Activated T-helper 1 cell treated with anti-CD3 and anti-CD28 coated beads, Interleukin-12 subunit alpha, Interleukin-12 subunit beta, Interleukin-2, Interleukin-4 antibody, amounts not matched to agents 30 ng/mL and 10 ng/mL and 1 ng/mL, durations not matched to agents 14 hours and 24 hours and 36 hours (primary cell): ENCODE measurements at regions of chr4 and their contacts with region 1.

Region 1: DNA sequence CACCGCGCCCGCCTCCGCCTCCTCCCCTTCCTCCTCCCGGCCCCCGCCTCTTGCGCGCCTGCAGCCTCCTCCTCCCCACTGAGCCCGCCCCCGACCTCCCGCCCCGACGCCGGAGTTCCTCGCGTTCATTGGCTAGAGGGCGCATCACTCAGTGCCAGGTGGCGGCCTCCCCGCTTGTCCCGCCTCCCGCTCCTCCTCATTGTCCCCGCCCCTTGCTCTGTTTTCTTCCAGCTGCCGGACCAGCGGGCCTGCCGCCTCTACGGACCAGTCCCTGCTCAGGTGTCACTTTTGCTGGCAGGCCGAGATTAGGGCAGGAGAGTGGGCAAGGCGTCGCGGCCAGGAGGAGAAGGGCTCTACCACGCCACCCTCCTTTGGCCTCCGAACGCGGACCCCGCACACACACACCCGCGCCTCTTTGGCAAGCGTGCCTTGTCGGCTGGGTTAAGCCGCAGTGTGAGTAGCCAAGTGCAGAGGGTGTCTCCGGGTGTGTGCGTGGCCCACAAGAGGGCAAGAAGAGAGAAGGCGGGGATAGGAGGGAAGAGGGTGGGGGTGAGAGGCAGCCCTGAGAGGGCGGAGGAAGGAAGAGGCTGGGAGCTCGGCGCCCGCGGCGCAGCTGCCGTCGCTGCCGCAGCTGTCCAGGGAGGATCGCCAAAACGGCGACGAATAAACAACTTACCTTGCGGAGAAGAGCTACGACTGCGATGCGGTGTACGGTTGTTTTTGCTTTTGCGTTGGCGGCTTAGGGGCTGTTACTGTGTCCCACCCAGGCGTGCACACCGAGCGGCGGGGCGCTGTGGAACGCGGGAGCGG is 436 bp upstream of the PPP3CA start:
- DNase-seq: peak; percentile 95
- H3K4me3 Mint-ChIP-seq: peak overlapping the region; percentile 92
- H3K27ac Mint-ChIP-seq: peak overlapping the region; percentile 88
- H3K4me1 Mint-ChIP-seq: peaks cover 33% of the 10 kb centered on the region
- H3K27me3 Mint-ChIP-seq: peaks cover 53% of the 10 kb centered on the region

Region 2: DNA sequence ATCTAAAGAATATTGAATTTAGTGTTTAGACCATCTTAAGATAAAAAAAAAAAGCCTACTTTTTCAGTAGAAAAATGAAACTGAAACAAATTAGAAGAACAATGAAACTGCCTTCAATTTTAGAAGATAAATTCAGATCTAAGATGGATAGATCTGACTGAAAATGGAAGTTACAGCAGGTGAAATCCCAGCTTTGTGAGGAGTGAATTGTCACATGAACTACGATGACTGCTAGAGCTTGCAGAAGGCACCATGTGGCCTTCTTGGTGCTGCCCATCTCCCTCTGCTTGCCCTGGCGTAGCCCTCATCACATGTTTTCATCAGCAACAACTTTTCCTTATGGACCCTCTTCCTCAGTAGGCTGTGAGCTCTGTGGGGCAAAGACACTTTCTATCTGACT is 778.6 kb before region 1 on chr4:
- intact Hi-C with region 1: loop called (anchors 5 kb)
- DNase-seq: no peak
- H3K4me3 Mint-ChIP-seq: no peak overlapping the region
- H3K27ac Mint-ChIP-seq: peak overlapping the region; percentile 49
- H3K4me1 Mint-ChIP-seq: peaks cover 20% of the 10 kb centered on the region
- H3K27me3 Mint-ChIP-seq: peaks cover 2% of the 10 kb centered on the region

Region 3: DNA sequence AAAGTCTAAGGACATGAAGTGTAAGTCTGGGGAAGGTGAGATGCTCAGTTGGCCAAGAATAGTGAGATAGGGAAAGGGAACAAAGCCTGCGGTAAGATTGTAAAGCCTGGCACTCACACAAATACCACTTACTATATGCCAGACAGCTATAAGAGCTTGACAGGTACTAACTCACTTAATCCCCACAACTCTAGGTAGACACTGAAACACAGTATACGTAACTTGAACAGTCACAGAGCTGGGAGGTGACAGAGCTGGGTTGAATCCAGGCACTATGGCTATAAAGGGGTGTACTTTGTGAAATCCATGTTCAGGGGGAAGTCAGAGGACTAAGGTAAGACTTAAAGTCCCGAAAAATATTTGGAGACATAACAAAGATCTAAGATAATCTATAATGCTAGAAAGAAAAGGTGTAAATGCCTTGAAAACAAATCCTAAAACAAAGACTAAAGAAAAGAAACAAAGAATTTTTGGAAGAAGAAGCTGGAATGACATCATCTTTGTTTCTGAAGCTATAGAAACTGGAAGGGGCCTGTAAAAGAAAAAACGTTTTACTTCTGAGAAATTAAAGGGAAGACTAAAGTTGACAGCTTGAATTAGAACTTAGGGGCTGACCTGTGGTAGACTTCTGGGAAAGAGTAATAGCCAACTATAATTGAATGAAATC is 172.9 kb before region 1 on chr4:
- intact Hi-C with region 1: no loop called
- DNase-seq: no peak
- H3K4me3 Mint-ChIP-seq: no peak overlapping the region
- H3K27ac Mint-ChIP-seq: no peak overlapping the region
- H3K4me1 Mint-ChIP-seq: peaks cover 22% of the 10 kb centered on the region
- H3K27me3 Mint-ChIP-seq: peaks cover 4% of the 10 kb centered on the region

Region 4: GRCh38 chr4:101205916-101206315 is 141.8 kb before region 1 on chr4:
- intact Hi-C with region 1: loop called (anchors 1 kb)
- DNase-seq: peak; percentile 56
- H3K4me3 Mint-ChIP-seq: peak overlapping the region; percentile 0
- H3K27ac Mint-ChIP-seq: peak overlapping the region; percentile 67
- H3K4me1 Mint-ChIP-seq: peaks cover 42% of the 10 kb centered on the region
- H3K27me3 Mint-ChIP-seq: no peaks in the 10 kb centered on the region

Region 5: GRCh38 chr4:101328063-101328602 is 19.6 kb before region 1 on chr4:
- intact Hi-C with region 1: loop called (anchors 1 kb)
- DNase-seq: peak; percentile 21
- H3K4me3 Mint-ChIP-seq: peak overlapping the region; percentile 45
- H3K27ac Mint-ChIP-seq: peak overlapping the region; percentile 81
- H3K4me1 Mint-ChIP-seq: peaks cover 31% of the 10 kb centered on the region
- H3K27me3 Mint-ChIP-seq: peaks cover 24% of the 10 kb centered on the region

Region 6: GRCh38 chr4:101400096-101400495 is 52.3 kb after region 1 on chr4:
- intact Hi-C with region 1: loop called (anchors 1 kb)
- DNase-seq: peak; percentile 12
- H3K4me3 Mint-ChIP-seq: peak overlapping the region; percentile 2
- H3K27ac Mint-ChIP-seq: peak overlapping the region; percentile 71
- H3K4me1 Mint-ChIP-seq: peaks cover 22% of the 10 kb centered on the region
- H3K27me3 Mint-ChIP-seq: peaks cover 6% of the 10 kb centered on the region

Region 7: GRCh38 chr4:101596781-101597552 is 249.2 kb after region 1 on chr4:
- intact Hi-C with region 1: loop called (anchors 10 kb)
- DNase-seq: no peak
- H3K4me3 Mint-ChIP-seq: no peak overlapping the region
- H3K27ac Mint-ChIP-seq: no peak overlapping the region
- H3K4me1 Mint-ChIP-seq: peaks cover 12% of the 10 kb centered on the region
- H3K27me3 Mint-ChIP-seq: no peaks in the 10 kb centered on the region

Region 8: DNA sequence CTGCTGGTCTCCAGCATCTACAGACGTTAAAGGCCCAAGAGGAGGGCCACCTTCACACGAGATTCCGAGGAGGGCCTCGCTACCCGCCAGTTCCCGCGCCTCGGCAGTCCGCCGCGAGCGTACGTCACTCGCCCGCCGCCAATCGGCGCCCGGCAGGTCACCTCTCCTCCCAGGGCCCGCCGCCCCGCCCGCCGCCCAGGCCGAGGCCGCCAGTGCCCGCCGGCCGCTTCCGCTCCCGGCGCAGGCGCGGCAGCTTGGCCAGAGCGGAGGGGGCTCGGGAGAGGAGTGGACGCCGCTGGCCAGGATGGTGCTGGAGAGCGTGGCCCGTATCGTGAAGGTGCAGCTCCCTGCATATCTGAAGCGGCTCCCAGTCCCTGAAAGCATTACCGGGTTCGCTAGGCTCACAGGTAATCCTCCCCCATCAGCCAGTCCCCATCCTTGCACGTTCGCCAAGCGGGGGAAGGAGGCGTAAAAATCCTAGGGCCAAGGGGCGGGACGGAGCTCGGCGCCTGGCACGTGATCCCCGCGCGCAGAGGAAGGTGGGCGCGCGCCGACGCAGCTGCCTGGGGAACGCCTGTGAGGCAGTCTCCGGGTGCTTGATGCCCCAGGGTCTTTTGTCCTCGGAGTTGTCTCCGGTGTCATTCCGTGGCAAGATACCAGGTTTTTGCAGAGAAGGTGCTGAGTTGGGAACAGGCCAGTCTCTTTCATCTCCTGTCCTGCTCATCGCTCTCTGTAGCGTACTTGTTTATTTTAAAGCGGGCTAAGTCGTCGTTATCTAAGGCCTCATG is 1521.2 kb after region 1 on chr4 and contains the start of gene CISD2:
- intact Hi-C with region 1: loop called (anchors 5 kb)
- DNase-seq: peak; percentile 91
- H3K4me3 Mint-ChIP-seq: peak within 1 kb of the TSS; percentile 93
- H3K27ac Mint-ChIP-seq: peak within 1 kb of the TSS; percentile 99
- H3K4me1 Mint-ChIP-seq: peaks cover 69% of the 10 kb centered on the region
- H3K27me3 Mint-ChIP-seq: no peaks in the 10 kb centered on the region
- total RNA-seq, gene CISD2: 41.2 and 50.7 TPM in 2 replicates